ENCODE measurements at regions of chr3 and their contacts with region 1.

Region 1: GRCh38 chr3:157081681-157082210 is 78.2 kb downstream of the CCNL1 start:
- DNase-seq: peak; percentile 94
- H3K4me3 ChIP-seq: no peak overlapping the region
- H3K27ac ChIP-seq: no peak overlapping the region
- H3K4me1 ChIP-seq: no peaks in the 10 kb centered on the region
- H3K27me3 ChIP-seq: no peaks in the 10 kb centered on the region
- CTCF ChIP-seq: peak; percentile 96

Region 2: GRCh38 chr3:156547637-156548036 is 534.1 kb before region 1 on chr3:
- intact Hi-C with region 1: loop called (anchors 10 kb)
- DNase-seq: no peak
- H3K4me3 ChIP-seq: no peak overlapping the region
- H3K27ac ChIP-seq: no peak overlapping the region
- H3K4me1 ChIP-seq: no peaks in the 10 kb centered on the region
- H3K27me3 ChIP-seq: no peaks in the 10 kb centered on the region
- CTCF ChIP-seq: no peak

Region 3: DNA sequence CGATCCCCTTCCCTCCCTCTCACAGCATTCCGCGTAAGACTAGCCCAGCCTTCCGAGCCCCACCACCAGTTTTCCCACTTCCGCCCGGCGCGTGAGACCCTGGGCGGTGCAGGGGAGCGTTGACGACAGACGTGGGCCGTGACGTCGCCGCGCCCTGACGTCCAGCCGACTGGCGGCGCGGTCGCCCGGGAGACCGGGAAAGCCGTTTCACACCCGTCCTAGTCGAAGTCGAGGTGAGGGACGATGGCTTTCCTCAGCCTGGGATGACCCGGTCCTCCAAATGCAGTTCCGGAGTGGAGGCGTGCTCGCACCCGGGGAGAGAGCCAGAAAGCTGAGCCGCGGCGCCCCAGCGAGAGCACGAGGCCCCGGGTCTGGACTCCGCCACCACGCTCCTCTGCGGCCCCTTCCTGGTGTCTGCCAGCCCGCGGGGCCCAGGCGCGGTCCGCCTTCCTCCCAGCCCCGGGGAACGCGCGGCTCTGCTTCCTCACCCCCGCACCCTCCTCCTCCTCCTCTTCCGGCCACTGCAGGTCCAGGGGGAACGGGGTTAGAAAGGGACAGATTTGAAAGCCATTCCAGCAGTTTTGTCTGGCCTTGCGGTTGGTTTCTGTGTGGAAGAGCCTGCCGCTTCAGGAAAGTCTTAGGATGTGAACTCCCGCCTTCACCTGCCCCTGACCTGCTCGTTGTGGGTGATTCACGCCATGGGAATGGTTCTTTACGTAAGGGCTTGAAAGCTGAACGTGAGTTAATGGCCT is 255.4 kb before region 1 on chr3 and contains the start of gene LEKR1:
- intact Hi-C with region 1: loop called (anchors 5 kb)
- DNase-seq: peak; percentile 87
- H3K4me3 ChIP-seq: peak within 1 kb of the TSS; percentile 69
- H3K27ac ChIP-seq: peak within 1 kb of the TSS; percentile 97
- H3K4me1 ChIP-seq: no peaks in the 10 kb centered on the region
- H3K27me3 ChIP-seq: no peaks in the 10 kb centered on the region
- CTCF ChIP-seq: no peak
- total RNA-seq, gene LEKR1: 1.6 to 2.0 TPM

Measured in colonic mucosa (tissue), 4 donors.